CD8-positive, alpha-beta T cell (primary cell): ENCODE measurements at regions of chr19 and their contacts with region 1.

Region 1: GRCh38 chr19:19053508-19054314 is 10.1 kb upstream of the SLC25A42 start:
- DNase-seq: peak; percentile 37 to 81 (median 68)
- ATAC-seq: peak; percentile 81
- H3K4me3 ChIP-seq: no peak overlapping the region
- H3K4me3 Mint-ChIP-seq: no peak overlapping the region
- H3K27ac ChIP-seq: no peak overlapping the region
- H3K27ac Mint-ChIP-seq: no peak overlapping the region
- H3K4me1 ChIP-seq: no peaks in the 10 kb centered on the region
- H3K4me1 Mint-ChIP-seq: no peaks in the 10 kb centered on the region
- H3K27me3 ChIP-seq: no peaks in the 10 kb centered on the region
- H3K27me3 Mint-ChIP-seq: no peaks in the 10 kb centered on the region
- CTCF ChIP-seq: peak; percentile 73

Region 2: DNA sequence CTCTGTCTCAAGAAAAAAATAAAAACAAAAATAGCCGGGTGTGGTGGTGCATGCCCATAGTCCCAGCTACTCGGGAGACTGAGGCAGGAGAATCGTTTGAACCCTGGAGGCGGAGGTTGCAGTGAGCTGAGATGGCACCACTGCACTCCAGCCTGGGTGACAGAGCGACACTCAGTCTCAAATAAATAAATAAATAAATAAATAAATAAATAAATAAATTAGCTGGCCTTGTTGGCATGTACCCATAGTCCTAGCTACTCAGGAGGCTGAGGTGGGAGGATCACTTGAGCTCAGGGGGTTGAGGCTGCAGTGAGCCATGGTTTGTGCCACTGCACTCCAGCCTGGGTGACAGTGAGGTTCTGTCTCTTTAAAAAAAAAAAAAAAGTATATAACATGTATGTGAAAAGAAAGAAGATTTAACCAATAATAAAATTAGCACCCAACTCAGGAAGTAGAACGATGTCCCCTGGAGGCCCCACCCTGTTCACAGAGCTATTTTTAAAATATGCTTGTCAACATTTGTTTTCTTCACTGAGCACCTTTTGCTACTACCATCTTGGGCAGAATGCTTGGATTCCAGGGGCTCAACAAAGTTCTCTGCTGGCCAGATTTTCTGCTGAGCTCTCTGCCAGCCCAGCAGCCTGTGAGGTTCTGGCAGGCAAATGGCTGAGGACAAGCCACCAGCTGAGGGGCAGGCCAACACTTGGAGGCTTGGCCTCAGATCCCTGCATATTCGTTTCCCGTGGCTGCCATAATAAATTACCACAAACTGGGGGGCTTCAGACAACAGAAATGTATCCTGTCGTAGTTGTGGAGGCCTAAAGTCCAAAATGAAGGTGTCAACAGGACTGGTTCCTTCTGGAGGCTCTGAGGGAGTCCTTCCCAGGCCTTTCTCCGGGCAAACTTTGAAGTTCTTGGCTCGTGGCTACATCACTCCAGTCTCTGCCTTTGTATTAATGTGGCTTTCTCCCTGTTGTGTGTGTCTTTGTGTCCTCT is 15.2 kb after region 1 on chr19:
- CTCF ChIA-PET with region 1: interaction called, 14 read pairs
- POLR2A ChIA-PET with region 1: no interaction called
- intact Hi-C with region 1: no loop called
- DNase-seq: peak in 2 of 9 experiments; percentile 19 to 46
- ATAC-seq: no peak
- H3K4me3 ChIP-seq: peak overlapping the region in 1 of 2 experiments; percentile 20
- H3K4me3 Mint-ChIP-seq: peak overlapping the region; percentile 43
- H3K27ac ChIP-seq: peak overlapping the region in 1 of 2 experiments; percentile 63
- H3K27ac Mint-ChIP-seq: peak overlapping the region; percentile 80
- H3K4me1 ChIP-seq: peaks cover 24% of the 10 kb centered on the region
- H3K4me1 Mint-ChIP-seq: peaks cover 54% of the 10 kb centered on the region
- H3K27me3 ChIP-seq: no peaks in the 10 kb centered on the region
- H3K27me3 Mint-ChIP-seq: no peaks in the 10 kb centered on the region
- CTCF ChIP-seq: no peak

Region 3: GRCh38 chr19:19115954-19116353 is 62.2 kb after region 1 on chr19:
- CTCF ChIA-PET with region 1: interaction called, 21 read pairs
- POLR2A ChIA-PET with region 1: no interaction called
- intact Hi-C with region 1: loop called in 1 of 2 experiments (anchors 2 kb)
- DNase-seq: peak; percentile 16 to 66 (median 52)
- ATAC-seq: peak; percentile 42
- H3K4me3 ChIP-seq: no peak overlapping the region
- H3K4me3 Mint-ChIP-seq: no peak overlapping the region
- H3K27ac ChIP-seq: no peak overlapping the region
- H3K27ac Mint-ChIP-seq: no peak overlapping the region
- H3K4me1 ChIP-seq: no peaks in the 10 kb centered on the region
- H3K4me1 Mint-ChIP-seq: no peaks in the 10 kb centered on the region
- H3K27me3 ChIP-seq: no peaks in the 10 kb centered on the region
- H3K27me3 Mint-ChIP-seq: no peaks in the 10 kb centered on the region
- CTCF ChIP-seq: peak; percentile 17